ENCODE measurements at regions of chr2 and their contacts with region 1.

Region 1: DNA sequence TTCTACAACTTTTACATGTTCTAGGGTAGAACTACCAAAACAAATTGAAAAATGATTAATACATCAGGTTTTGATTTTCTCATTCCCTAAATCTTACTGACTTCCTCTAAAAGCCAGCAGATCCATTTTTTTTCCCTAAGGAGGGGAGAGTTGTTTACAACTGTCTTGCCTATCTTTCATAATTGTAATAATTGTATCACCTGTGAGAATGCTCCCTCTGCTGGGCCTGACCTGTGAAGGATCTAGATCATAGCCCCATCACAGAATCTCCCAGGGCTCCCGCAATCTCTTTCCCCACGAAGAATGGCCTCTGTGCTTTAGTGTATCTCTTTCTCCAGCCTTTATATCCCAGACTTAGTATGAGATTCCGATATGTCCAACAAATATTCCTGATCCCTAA is 9.1 kb downstream of the LOXL3 start:
- DNase-seq: peak in 1 of 2 experiments; percentile 44
- ATAC-seq: peak in 1 of 2 experiments; percentile 35; a peak in 2 of 6 replicates
- H3K4me3 ChIP-seq: no peak overlapping the region
- H3K27ac ChIP-seq: no peak overlapping the region
- H3K4me1 ChIP-seq: peaks cover 9% of the 10 kb centered on the region
- CTCF ChIP-seq: peak; percentile 36
- EP300 ChIP-seq: no peak
- POLR2A ChIP-seq: no peak
- RAD21 ChIP-seq: peak in 1 of 2 experiments; percentile 24; a peak in 1 of 5 replicates

Region 2: DNA sequence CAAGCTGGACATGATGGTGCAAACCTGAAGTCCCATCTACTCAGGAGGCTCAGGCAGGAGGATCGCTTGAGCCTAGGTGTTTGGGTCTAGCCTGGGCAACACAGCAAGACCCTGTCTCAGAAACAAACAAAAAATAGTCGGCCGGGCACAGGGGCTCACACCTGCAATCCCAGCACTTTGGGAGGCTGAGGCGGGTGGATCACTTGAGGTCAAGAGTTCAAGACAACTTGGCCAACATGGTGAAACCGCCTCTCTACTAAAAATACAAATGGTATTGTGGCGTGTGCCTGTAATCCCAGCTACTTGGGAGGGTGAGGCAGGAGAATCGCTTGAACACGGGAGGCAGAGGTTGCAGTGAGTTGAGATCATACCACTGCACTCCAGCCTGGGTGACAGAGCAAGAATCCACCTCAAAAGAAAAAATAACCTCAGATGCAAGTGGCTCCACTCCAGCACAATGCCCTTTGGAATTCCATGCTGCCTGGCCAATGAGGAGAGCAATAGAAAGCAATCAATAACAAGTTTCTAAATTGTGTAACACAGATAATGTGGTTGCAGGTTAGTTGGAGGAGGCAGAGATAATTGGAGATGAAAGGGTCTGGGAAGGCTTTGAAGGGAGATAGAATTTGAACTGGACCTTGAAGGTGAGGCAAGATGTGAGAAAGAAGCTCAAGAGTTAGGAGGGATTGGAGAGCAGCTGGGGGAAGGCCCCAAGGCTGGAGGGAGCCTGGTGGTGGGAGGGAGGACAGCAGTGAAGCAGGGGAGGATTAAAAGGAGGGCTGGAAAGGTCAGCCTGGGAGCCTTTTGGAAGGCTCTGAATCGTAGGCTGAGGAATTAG is 55.8 kb before region 1 on chr2:
- CTCF ChIA-PET with region 1: interaction called, 28 read pairs
- POLR2A ChIA-PET with region 1: no interaction called
- DNase-seq: no peak
- ATAC-seq: peak; percentile 56 to 59; a peak in 5 of 6 replicates
- H3K4me3 ChIP-seq: no peak overlapping the region
- H3K27ac ChIP-seq: no peak overlapping the region
- H3K4me1 ChIP-seq: peaks cover 4% of the 10 kb centered on the region; the same call in 2 of the 3 replicates
- CTCF ChIP-seq: no peak
- EP300 ChIP-seq: no peak
- POLR2A ChIP-seq: no peak
- RAD21 ChIP-seq: no peak

Region 3: DNA sequence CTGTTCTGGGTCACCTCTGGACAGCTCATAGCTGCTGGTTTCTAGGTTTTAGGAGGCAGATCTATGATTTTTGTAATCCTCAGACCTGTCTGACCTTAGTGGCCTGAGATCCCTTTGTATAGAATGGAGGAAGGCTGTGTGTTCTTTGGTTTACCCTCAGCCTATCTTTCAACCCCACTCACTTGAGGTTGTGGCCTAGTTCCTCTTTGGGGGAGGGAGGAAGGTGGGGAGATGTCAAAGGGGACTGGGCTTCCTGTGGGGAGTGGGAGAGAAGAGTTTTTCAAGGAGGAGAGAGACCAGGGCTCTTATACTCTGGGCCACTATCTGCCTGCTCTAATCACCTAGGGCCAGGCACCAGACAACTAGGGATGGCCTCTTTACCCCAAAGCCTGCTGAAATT is 137.9 kb after region 1 on chr2:
- CTCF ChIA-PET with region 1: no interaction called
- POLR2A ChIA-PET with region 1: no interaction called
- DNase-seq: no peak
- ATAC-seq: no peak
- H3K4me3 ChIP-seq: no peak overlapping the region
- H3K27ac ChIP-seq: no peak overlapping the region
- H3K4me1 ChIP-seq: no peaks in the 10 kb centered on the region
- CTCF ChIP-seq: no peak
- EP300 ChIP-seq: no peak
- POLR2A ChIP-seq: no peak
- RAD21 ChIP-seq: no peak

Measured in A549 (cell line).